Sigmoid colon (tissue), 7 donors: ENCODE measurements at regions of chr14 and their contacts with region 1.

Region 1: DNA sequence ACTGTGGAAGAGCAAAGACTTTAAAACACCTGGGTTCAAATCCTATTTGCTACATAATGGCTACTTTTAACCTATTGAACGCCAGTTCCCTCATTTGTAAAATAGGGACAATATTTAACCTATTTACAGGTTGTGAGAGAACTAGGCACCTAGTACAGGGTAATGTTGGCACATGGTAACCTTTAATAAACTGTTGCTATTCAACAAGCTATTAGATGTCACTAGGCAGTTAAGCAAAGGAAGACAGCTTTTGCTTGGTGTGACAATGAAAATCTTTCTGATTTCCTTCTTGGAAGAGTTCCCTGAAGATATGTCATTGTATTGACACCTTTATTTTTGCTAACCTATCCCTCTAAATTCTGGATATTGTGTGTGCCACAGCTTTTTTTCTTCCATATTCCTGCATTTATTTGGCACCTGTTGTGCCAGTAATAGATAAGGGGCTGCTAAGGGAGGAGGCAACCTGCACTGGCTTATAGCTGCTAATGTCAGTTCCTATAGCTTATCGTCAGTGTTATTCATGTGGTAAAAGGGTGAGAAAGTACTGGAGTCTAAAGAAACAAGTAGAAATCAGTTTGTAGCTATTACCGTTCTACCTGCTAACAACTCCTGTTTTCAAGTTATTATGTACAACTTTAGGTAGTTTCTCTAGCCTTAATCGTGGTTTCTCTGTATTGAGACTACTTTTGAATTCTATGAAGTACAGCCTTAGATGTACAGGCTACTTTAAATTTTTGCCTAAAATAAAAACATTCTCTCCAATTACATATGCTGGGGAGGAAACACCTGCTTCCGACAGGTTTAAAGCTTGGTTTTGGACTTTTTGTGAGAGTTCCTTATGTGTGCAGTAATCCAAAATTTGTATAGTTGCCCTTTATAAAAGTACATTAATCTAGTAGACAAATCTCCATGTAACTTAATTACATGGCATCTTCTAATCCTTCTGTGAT is 24.3 kb downstream of the HIF1A start:
- DNase-seq: no peak
- H3K4me3 ChIP-seq: no peak overlapping the region
- H3K27ac ChIP-seq: peak overlapping the region in 1 of 4 donors; percentile 24
- H3K4me1 ChIP-seq: peaks cover 0 to 35% (median 21%) of the 10 kb centered on the region in 4 donors
- H3K27me3 ChIP-seq: no peaks in the 10 kb centered on the region
- CTCF ChIP-seq: no peak
- EP300 ChIP-seq: no peak
- POLR2A ChIP-seq: no peak

Region 2: GRCh38 chr14:61296719-61297502 is 422.7 kb before region 1 on chr14:
- intact Hi-C with region 1: no loop called
- DNase-seq: no peak
- H3K4me3 ChIP-seq: no peak overlapping the region
- H3K27ac ChIP-seq: no peak overlapping the region
- H3K4me1 ChIP-seq: no peaks in the 10 kb centered on the region
- H3K27me3 ChIP-seq: no peaks in the 10 kb centered on the region
- CTCF ChIP-seq: peak in 1 of 4 experiments; percentile 16
- EP300 ChIP-seq: no peak
- POLR2A ChIP-seq: no peak

Region 3: GRCh38 chr14:61342486-61342885 is 377.1 kb before region 1 on chr14:
- intact Hi-C with region 1: no loop called
- DNase-seq: no peak
- H3K4me3 ChIP-seq: no peak overlapping the region
- H3K27ac ChIP-seq: peak overlapping the region; percentile 11 to 61 (median 24)
- H3K4me1 ChIP-seq: peaks cover 0 to 10% (median 0%) of the 10 kb centered on the region in 4 donors
- H3K27me3 ChIP-seq: no peaks in the 10 kb centered on the region
- CTCF ChIP-seq: no peak
- EP300 ChIP-seq: no peak
- POLR2A ChIP-seq: no peak

Region 4: DNA sequence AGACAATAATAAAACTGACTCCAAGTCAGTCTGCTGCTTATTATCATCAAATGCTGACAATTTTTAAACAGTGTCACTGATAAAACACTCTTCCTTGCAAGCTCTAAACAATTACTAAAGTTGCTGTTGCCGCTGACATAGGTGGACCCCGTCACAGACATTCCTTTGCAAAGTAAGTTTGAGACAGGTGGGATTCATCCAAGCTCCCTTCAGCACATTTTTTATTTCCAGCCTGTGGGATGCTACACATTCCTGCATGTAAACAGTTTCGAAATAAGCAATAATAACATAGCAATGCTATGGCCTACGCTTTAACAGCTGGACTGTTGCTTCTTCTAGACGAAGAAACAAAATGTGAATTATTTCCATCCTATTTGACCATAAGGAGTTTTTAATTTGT is 109.7 kb before region 1 on chr14:
- intact Hi-C with region 1: loop called (anchors 5 kb)
- DNase-seq: no peak
- H3K4me3 ChIP-seq: no peak overlapping the region
- H3K27ac ChIP-seq: peak overlapping the region; percentile 6 to 81 (median 58)
- H3K4me1 ChIP-seq: peaks cover 0 to 33% (median 27%) of the 10 kb centered on the region in 4 donors
- H3K27me3 ChIP-seq: no peaks in the 10 kb centered on the region
- CTCF ChIP-seq: no peak
- EP300 ChIP-seq: no peak
- POLR2A ChIP-seq: no peak

Region 5: GRCh38 chr14:61940666-61941423 is 221.2 kb after region 1 on chr14:
- intact Hi-C with region 1: no loop called
- DNase-seq: no peak
- H3K4me3 ChIP-seq: no peak overlapping the region
- H3K27ac ChIP-seq: no peak overlapping the region
- H3K4me1 ChIP-seq: no peaks in the 10 kb centered on the region
- H3K27me3 ChIP-seq: no peaks in the 10 kb centered on the region
- CTCF ChIP-seq: no peak
- EP300 ChIP-seq: no peak
- POLR2A ChIP-seq: no peak